Activated naive CD4-positive, alpha-beta T cell treated with anti-CD3 and anti-CD28 coated beads for 36 hours (primary cell): ENCODE measurements at regions of chr5 and their contacts with region 1.

Region 1: GRCh38 chr5:138408023-138408422 is 30.8 kb upstream of the REEP2 start:
- DNase-seq: peak; percentile 73
- H3K4me3 Mint-ChIP-seq: no peak overlapping the region
- H3K27ac Mint-ChIP-seq: peak overlapping the region; percentile 74
- H3K4me1 Mint-ChIP-seq: peaks cover 11% of the 10 kb centered on the region
- H3K27me3 Mint-ChIP-seq: no peaks in the 10 kb centered on the region

Region 2: DNA sequence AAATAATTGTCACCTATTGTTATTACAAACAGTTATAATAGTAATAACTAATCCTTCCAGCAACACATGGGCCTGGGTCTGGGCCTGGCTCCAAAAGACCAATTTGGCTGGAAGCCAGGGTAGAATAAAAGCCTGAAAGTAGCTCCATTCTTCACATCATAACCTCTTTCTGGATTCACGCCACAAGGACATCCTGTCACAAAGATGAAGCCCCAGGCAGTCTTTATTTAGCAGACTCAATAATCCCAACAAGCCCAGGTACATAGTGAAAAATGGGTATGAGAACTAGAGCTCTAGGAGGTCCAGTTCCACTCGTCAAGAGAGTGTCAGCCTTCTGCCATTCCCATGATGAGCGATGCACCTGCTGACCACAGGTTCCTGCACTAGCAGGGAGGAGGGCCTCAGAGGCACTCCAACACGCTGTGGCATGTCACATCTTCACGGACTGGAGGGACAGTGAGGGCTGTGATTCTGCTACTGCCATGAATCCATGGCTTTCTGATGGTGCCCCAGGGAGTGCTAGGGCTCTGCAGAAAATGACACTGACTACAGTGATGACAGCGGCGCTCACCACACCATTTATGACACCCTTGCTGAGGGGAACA is 1033.8 kb before region 1 on chr5:
- CTCF ChIA-PET with region 1: no interaction called
- intact Hi-C with region 1: no loop called
- DNase-seq: no peak
- H3K4me3 Mint-ChIP-seq: no peak overlapping the region
- H3K27ac Mint-ChIP-seq: no peak overlapping the region
- H3K4me1 Mint-ChIP-seq: no peaks in the 10 kb centered on the region
- H3K27me3 Mint-ChIP-seq: peaks cover 2% of the 10 kb centered on the region

Region 3: GRCh38 chr5:138337685-138338410 is 70.2 kb before region 1 on chr5 and contains the start of gene FAM53C:
- CTCF ChIA-PET with region 1: no interaction called
- intact Hi-C with region 1: loop called (anchors 5 kb)
- DNase-seq: peak; percentile 91
- H3K4me3 Mint-ChIP-seq: peak within 1 kb of the TSS; percentile 87
- H3K27ac Mint-ChIP-seq: peak within 1 kb of the TSS; percentile 98
- H3K4me1 Mint-ChIP-seq: peaks cover 27% of the 10 kb centered on the region
- H3K27me3 Mint-ChIP-seq: no peaks in the 10 kb centered on the region
- total RNA-seq, gene FAM53C: 20.7 to 21.8 TPM